A549 (cell line): ENCODE measurements at regions of chr15 and their contacts with region 1.

Region 1: GRCh38 chr15:81274931-81275707 is 48.8 kb downstream of the STARD5 start:
- DNase-seq: peak; percentile 67 to 80
- ATAC-seq: peak; percentile 82 to 97
- H3K4me3 ChIP-seq: no peak overlapping the region
- H3K27ac ChIP-seq: no peak overlapping the region
- H3K4me1 ChIP-seq: no peaks in the 10 kb centered on the region
- CTCF ChIP-seq: peak; percentile 84
- EP300 ChIP-seq: no peak
- POLR2A ChIP-seq: no peak
- RAD21 ChIP-seq: peak; percentile 94 to 97

Region 2: DNA sequence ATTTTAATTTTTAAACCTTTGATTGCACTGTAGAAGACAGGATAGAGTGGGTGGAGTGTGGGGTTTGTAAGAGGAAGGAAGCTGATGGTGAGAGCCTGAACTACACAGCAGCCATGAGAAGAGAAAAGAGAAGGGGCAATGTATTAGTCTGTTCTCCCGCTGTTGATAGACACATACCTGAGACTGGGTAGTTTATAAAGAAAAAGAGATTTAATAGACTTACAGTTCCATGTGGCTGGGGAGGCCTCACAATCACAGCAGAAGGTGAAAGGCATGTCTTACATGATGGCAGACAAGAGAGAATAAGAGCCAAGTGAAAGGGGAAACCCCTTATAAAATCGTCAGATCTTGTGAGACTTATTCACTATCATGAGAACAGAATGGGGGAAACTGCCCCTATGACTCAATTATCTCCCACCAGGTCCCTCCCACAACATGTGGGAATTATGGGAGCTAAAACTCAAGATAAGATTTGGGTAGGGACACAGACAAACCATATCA is 11.6 kb after region 1 on chr15:
- CTCF ChIA-PET with region 1: interaction called, 22 read pairs
- POLR2A ChIA-PET with region 1: no interaction called
- DNase-seq: no peak
- ATAC-seq: no peak
- H3K4me3 ChIP-seq: no peak overlapping the region
- H3K27ac ChIP-seq: no peak overlapping the region
- H3K4me1 ChIP-seq: no peaks in the 10 kb centered on the region
- CTCF ChIP-seq: no peak
- EP300 ChIP-seq: no peak
- POLR2A ChIP-seq: no peak
- RAD21 ChIP-seq: no peak

Region 3: GRCh38 chr15:81308260-81308659 is 33.1 kb after region 1 on chr15:
- CTCF ChIA-PET with region 1: interaction called, 29 read pairs
- POLR2A ChIA-PET with region 1: no interaction called
- DNase-seq: no peak
- ATAC-seq: no peak
- H3K4me3 ChIP-seq: no peak overlapping the region
- H3K27ac ChIP-seq: no peak overlapping the region
- H3K4me1 ChIP-seq: peaks cover 11% of the 10 kb centered on the region
- CTCF ChIP-seq: no peak
- EP300 ChIP-seq: no peak
- POLR2A ChIP-seq: no peak
- RAD21 ChIP-seq: no peak

Region 4: DNA sequence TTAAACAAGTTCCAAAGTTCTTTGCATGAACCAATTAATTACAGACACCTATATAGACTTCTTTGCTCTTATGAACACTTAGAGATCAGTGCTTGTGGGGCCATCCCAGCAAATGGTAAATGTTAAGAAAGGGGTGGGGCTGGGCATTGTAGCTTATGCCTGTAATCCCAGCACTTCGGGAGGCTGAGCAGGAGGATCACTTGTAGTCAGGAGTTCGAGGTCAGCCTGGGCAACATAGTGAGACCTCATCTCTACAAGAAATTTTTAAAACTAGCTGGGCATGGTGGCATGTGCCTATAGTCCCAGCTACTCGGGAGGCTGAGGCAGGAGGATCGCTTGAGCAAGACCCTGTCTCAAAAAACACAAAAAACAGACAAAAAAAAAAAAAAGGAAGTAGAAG is 68.3 kb after region 1 on chr15:
- CTCF ChIA-PET with region 1: interaction called, 14 read pairs
- POLR2A ChIA-PET with region 1: no interaction called
- DNase-seq: no peak
- ATAC-seq: no peak
- H3K4me3 ChIP-seq: no peak overlapping the region
- H3K27ac ChIP-seq: no peak overlapping the region
- H3K4me1 ChIP-seq: peaks cover 9% of the 10 kb centered on the region; the same call in 2 of the 3 replicates
- CTCF ChIP-seq: no peak
- EP300 ChIP-seq: no peak
- POLR2A ChIP-seq: no peak
- RAD21 ChIP-seq: no peak

Region 5: DNA sequence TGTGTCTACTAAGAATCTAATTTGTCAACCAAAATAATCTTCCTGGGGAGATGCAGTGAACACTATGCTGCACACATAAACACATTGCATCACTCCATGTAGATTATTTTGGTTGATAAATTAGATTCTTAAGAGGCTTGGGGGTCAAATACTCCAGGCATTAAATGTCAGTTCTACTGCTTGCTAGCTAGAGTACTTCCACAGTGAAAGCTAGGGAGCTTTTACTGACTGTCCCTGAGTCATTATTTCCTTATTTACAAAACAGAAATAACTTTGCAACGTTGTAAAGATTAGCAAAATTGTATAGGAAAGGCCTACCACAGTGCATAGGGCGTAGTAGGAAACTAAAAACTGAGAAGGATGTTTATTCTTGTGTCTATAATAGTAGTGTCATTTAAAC is 111.8 kb after region 1 on chr15:
- CTCF ChIA-PET with region 1: interaction called, 26 read pairs
- POLR2A ChIA-PET with region 1: no interaction called
- DNase-seq: no peak
- ATAC-seq: no peak
- H3K4me3 ChIP-seq: no peak overlapping the region
- H3K27ac ChIP-seq: no peak overlapping the region
- H3K4me1 ChIP-seq: no peaks in the 10 kb centered on the region
- CTCF ChIP-seq: no peak
- EP300 ChIP-seq: no peak
- POLR2A ChIP-seq: no peak
- RAD21 ChIP-seq: no peak

Region 6: DNA sequence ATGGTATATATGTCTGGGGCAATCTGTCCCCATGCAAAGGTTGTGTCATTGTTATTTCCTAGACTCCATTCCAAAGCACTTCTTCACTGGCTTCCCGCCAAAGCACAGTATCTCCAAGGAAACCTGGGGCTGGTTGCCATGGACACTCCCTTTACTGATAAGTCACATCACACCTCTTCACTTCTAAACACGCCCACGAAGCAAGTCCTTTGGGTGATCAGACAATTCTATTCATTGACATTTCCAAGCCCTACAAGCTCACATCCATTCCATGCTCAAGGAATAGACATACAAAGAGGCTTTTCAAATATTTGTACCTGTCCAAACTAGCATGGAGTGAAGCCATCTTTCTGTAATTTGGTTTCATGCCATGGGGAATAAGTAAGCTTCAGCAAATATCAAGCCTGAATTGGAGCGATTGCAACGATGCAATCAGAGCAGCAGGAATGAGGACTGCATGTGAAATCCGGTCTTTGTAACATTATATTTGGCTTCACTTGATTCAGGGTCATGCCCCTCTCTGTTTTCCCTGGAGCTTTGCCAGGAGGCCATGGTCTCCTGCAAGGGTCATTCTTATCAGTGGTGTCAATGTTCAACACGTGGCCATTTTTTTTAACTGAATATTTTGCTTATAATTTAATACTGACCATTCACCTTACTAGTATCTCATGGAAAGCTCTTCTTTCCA is 300.5 kb after region 1 on chr15:
- CTCF ChIA-PET with region 1: no interaction called
- POLR2A ChIA-PET with region 1: no interaction called
- DNase-seq: no peak
- ATAC-seq: no peak
- H3K4me3 ChIP-seq: no peak overlapping the region
- H3K27ac ChIP-seq: no peak overlapping the region
- H3K4me1 ChIP-seq: no peaks in the 10 kb centered on the region
- CTCF ChIP-seq: no peak
- EP300 ChIP-seq: no peak
- POLR2A ChIP-seq: no peak
- RAD21 ChIP-seq: no peak